ENCODE measurements at regions of chr14 and their contacts with region 1.

Region 1: DNA sequence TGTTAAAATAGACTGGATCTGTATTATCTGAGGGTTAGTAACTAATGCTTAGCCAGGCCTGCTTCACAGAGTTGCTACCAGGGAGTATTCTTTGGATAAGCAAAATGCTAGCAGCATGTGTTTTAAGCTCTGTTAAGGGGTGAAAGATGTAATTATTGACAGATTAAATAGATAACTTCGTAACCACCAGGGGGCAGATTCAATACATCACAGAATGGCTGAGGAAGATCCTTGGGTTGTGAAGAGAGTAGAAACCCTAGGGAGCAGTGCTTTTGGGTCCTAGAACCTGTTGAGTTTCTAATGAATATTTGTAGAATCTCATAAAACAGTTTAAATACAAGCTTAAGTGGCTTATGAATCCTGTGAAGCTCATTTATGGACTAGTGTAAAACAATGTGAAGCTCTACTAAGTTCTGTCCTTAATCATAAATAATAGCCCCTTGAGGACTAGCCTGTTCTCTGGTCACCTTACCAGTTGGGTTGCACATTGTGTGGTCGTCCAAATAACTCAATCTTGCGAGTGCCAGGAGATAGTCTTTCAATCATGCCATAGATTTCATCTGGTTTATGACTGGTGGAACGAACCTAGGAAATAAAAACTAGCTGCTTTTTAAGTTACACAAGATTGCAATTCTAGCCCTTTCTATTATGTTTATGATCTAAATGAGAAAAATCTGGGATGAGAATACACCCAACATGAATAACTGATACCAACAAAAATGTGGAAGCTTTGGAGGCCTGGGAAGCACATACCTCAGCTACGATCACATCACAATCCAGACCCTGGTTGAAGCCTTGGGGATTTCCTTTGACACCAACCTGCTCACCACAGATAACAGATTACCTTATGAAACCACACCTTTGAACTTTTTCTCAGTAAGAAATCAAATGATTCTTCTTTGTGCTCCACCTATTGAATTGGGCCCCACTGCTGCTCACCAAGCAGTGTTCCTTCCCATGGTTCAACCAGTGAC is 12.3 kb downstream of the METTL3 start:
- DNase-seq: peak; percentile 32
- H3K4me3 Mint-ChIP-seq: no peak overlapping the region
- H3K27ac Mint-ChIP-seq: peak overlapping the region; percentile 51
- H3K4me1 Mint-ChIP-seq: peaks cover 18% of the 10 kb centered on the region
- H3K27me3 Mint-ChIP-seq: no peaks in the 10 kb centered on the region

Region 2: GRCh38 chr14:21437063-21437901 is 61.6 kb before region 1 on chr14:
- CTCF ChIA-PET with region 1: interaction called, 10 read pairs
- intact Hi-C with region 1: no loop called
- DNase-seq: peak; percentile 100
- H3K4me3 Mint-ChIP-seq: peak overlapping the region; percentile 84
- H3K27ac Mint-ChIP-seq: peak overlapping the region; percentile 90
- H3K4me1 Mint-ChIP-seq: peaks cover 52% of the 10 kb centered on the region
- H3K27me3 Mint-ChIP-seq: no peaks in the 10 kb centered on the region

Region 3: DNA sequence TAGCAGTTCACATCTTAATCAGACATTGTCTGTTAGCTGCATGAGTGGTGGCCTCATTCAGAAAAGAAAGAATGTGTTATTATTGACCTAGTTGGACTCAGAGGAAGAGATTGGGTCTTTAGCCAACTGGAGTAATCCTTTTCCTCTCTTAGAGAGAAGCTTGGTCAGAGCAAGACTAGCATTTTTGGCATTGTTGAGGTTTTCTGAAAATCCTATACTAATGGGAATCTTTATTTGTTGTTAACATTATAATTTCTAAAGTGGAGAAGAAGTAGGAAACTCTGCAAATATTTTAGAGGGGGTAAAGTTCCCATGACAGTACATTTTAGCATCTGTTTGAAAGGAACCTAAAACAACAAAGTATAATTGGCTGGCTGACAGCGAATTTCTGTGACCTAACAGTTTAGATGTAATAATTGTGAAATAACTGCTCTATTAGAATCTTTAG is 12.2 kb before region 1 on chr14:
- CTCF ChIA-PET with region 1: interaction called, 19 read pairs
- intact Hi-C with region 1: no loop called
- DNase-seq: no peak
- H3K4me3 Mint-ChIP-seq: no peak overlapping the region
- H3K27ac Mint-ChIP-seq: no peak overlapping the region
- H3K4me1 Mint-ChIP-seq: no peaks in the 10 kb centered on the region
- H3K27me3 Mint-ChIP-seq: no peaks in the 10 kb centered on the region

Region 4: GRCh38 chr14:21525962-21526671 is 27.3 kb after region 1 on chr14 and contains the start of gene SALL2:
- CTCF ChIA-PET with region 1: interaction called, 26 read pairs
- intact Hi-C with region 1: loop called (anchors 1 kb)
- DNase-seq: peak; percentile 86
- H3K4me3 Mint-ChIP-seq: peak within 1 kb of the TSS; percentile 79
- H3K27ac Mint-ChIP-seq: peak within 1 kb of the TSS; percentile 70
- H3K4me1 Mint-ChIP-seq: peaks cover 9% of the 10 kb centered on the region
- H3K27me3 Mint-ChIP-seq: no peaks in the 10 kb centered on the region
- total RNA-seq, gene SALL2: 3.1 to 4.1 TPM

Region 5: GRCh38 chr14:21557084-21557901 is 58.5 kb after region 1 on chr14:
- CTCF ChIA-PET with region 1: interaction called, 52 read pairs
- intact Hi-C with region 1: loop called (anchors 1 kb)
- DNase-seq: peak; percentile 91
- H3K4me3 Mint-ChIP-seq: peak overlapping the region; percentile 27
- H3K27ac Mint-ChIP-seq: no peak overlapping the region
- H3K4me1 Mint-ChIP-seq: peaks cover 6% of the 10 kb centered on the region
- H3K27me3 Mint-ChIP-seq: no peaks in the 10 kb centered on the region